CD8-positive, alpha-beta T cell (primary cell): ENCODE measurements at regions of chr17 and their contacts with region 1.

Region 1: DNA sequence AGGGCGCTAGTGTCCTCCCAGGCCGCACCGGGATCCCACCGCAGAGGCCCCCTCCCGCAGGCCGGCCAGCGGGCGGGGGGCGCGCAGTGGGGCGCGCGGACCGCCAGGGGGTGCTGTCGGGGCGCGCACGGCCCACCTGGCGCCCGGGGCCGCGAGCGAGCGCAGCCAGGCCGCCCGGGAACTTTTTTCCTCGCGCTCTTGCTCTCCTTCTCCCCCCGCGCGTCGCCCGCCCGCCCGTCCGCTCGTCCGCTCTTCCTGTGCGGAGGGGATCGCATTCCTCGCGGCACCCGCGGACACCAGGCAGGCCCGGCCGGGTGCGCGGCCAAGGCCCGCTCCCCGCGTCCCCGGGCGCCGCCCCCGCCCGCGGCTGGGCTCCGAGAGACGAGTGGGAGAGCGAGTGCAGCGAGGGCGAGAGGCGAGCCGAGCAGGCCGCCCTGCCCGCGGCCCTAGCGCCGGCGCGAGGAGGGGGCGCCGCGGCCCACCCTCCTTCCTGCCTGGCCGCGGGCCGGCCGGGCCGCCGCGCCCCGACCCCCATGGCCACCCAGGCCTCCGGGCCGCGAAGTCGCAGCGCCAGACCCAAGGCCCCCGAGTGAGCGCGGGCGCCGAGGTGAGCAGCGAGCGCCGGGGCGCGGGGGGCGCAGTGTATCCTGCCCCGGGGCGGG is at the start of gene RAI1:
- DNase-seq: peak; percentile 51 to 89 (median 73)
- ATAC-seq: peak; percentile 58
- H3K4me3 ChIP-seq: peak within 1 kb of the TSS; percentile 74
- H3K4me3 Mint-ChIP-seq: peak within 1 kb of the TSS; percentile 93
- H3K27ac ChIP-seq: peak within 1 kb of the TSS; percentile 67 to 90
- H3K27ac Mint-ChIP-seq: peak within 1 kb of the TSS; percentile 77
- H3K4me1 ChIP-seq: peaks cover 34% of the 10 kb centered on the region
- H3K4me1 Mint-ChIP-seq: peaks cover 34% of the 10 kb centered on the region
- H3K27me3 ChIP-seq: no peaks in the 10 kb centered on the region
- H3K27me3 Mint-ChIP-seq: no peaks in the 10 kb centered on the region
- CTCF ChIP-seq: peak; percentile 50
- total RNA-seq, gene RAI1: 22.9 to 23.5 TPM

Region 2: GRCh38 chr17:17598003-17598402 is 83.3 kb before region 1 on chr17:
- CTCF ChIA-PET with region 1: no interaction called
- POLR2A ChIA-PET with region 1: no interaction called
- intact Hi-C with region 1: no loop called
- DNase-seq: no peak
- ATAC-seq: no peak
- H3K4me3 ChIP-seq: no peak overlapping the region
- H3K4me3 Mint-ChIP-seq: no peak overlapping the region
- H3K27ac ChIP-seq: no peak overlapping the region
- H3K27ac Mint-ChIP-seq: no peak overlapping the region
- H3K4me1 ChIP-seq: peaks cover under 1% of the 10 kb centered on the region
- H3K4me1 Mint-ChIP-seq: peaks cover under 1% of the 10 kb centered on the region
- H3K27me3 ChIP-seq: no peaks in the 10 kb centered on the region
- H3K27me3 Mint-ChIP-seq: no peaks in the 10 kb centered on the region
- CTCF ChIP-seq: no peak

Region 3: GRCh38 chr17:17694169-17695081 is 13.1 kb after region 1 on chr17:
- CTCF ChIA-PET with region 1: interaction called, 16 read pairs
- POLR2A ChIA-PET with region 1: interaction called, 8 read pairs
- intact Hi-C with region 1: loop called (anchors 1 kb)
- DNase-seq: peak; percentile 25 to 87 (median 76)
- ATAC-seq: peak; percentile 72
- H3K4me3 ChIP-seq: peak overlapping the region; percentile 83 to 91
- H3K4me3 Mint-ChIP-seq: peak overlapping the region; percentile 86
- H3K27ac ChIP-seq: peak overlapping the region; percentile 88 to 97
- H3K27ac Mint-ChIP-seq: peak overlapping the region; percentile 99
- H3K4me1 ChIP-seq: peaks cover 52% of the 10 kb centered on the region
- H3K4me1 Mint-ChIP-seq: peaks cover 68% of the 10 kb centered on the region
- H3K27me3 ChIP-seq: no peaks in the 10 kb centered on the region
- H3K27me3 Mint-ChIP-seq: no peaks in the 10 kb centered on the region
- CTCF ChIP-seq: no peak

Region 4: GRCh38 chr17:17783116-17783824 is 102.0 kb after region 1 on chr17:
- CTCF ChIA-PET with region 1: interaction called, 3 read pairs
- POLR2A ChIA-PET with region 1: no interaction called
- intact Hi-C with region 1: loop called in 1 of 2 experiments (anchors 5 kb)
- DNase-seq: peak; percentile 24 to 79 (median 65)
- ATAC-seq: peak; percentile 58
- H3K4me3 ChIP-seq: peak overlapping the region; percentile 50 to 54
- H3K4me3 Mint-ChIP-seq: peak overlapping the region; percentile 85
- H3K27ac ChIP-seq: peak overlapping the region in 1 of 2 experiments; percentile 36
- H3K27ac Mint-ChIP-seq: peak overlapping the region; percentile 41
- H3K4me1 ChIP-seq: peaks cover 30% of the 10 kb centered on the region
- H3K4me1 Mint-ChIP-seq: peaks cover 30% of the 10 kb centered on the region
- H3K27me3 ChIP-seq: peaks cover 0 to 4% of the 10 kb centered on the region in 2 experiments
- H3K27me3 Mint-ChIP-seq: no peaks in the 10 kb centered on the region
- CTCF ChIP-seq: peak; percentile 26

Region 5: DNA sequence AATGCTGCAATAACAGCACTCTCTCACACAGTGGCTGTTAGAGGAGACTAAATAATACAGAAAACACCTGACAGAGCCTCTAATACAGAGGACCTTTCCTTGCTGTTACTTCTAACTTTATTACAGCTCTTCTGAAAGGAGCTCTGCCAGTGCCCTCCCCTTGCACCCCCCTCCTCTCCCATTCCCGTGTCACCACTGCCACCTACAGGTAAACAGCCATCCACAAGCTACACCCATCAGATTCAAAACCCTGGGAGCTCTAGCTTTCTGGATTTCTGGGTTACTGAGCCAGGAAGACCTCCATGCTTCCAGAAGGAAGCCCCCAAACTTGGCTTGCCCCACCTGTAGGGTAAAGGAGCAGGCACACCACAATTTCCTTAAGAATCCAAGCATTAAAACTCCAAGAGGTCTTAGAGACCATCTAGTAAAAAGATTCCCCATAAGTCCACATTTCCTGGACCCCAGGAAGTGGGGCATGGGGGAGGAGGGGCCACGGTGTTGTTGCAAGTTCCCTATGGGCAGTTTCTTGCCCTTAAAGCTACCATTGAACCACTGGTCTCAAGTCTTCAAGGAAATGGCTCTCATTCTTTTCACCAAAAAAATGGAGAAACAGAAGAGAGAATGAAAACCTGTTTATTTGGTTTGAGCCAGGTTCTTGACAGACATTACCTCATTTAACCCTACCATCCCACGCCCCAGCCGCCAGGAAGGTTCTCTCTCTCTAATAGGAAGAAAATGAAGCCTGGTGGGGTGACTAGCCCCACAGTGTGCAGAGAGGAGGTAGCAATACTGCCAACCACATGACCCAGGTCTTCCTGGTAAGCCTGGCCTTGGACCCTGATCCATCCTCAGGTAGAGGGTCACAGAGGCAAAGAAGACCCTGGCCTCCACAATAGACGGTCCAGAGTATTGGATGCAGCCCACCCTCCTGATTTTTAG is 238.1 kb after region 1 on chr17:
- CTCF ChIA-PET with region 1: interaction called, 16 read pairs
- POLR2A ChIA-PET with region 1: no interaction called
- intact Hi-C with region 1: loop called (anchors 1 kb)
- DNase-seq: peak; percentile 34 to 79 (median 67)
- ATAC-seq: peak; percentile 97
- H3K4me3 ChIP-seq: no peak overlapping the region
- H3K4me3 Mint-ChIP-seq: no peak overlapping the region
- H3K27ac ChIP-seq: no peak overlapping the region
- H3K27ac Mint-ChIP-seq: no peak overlapping the region
- H3K4me1 ChIP-seq: peaks cover 6% of the 10 kb centered on the region
- H3K4me1 Mint-ChIP-seq: peaks cover 13% of the 10 kb centered on the region
- H3K27me3 ChIP-seq: no peaks in the 10 kb centered on the region
- H3K27me3 Mint-ChIP-seq: no peaks in the 10 kb centered on the region
- CTCF ChIP-seq: peak; percentile 73